Right ventricle myocardium inferior (tissue), 1 donor: ENCODE measurements at regions of chr6 and their contacts with region 1.

Region 1: DNA sequence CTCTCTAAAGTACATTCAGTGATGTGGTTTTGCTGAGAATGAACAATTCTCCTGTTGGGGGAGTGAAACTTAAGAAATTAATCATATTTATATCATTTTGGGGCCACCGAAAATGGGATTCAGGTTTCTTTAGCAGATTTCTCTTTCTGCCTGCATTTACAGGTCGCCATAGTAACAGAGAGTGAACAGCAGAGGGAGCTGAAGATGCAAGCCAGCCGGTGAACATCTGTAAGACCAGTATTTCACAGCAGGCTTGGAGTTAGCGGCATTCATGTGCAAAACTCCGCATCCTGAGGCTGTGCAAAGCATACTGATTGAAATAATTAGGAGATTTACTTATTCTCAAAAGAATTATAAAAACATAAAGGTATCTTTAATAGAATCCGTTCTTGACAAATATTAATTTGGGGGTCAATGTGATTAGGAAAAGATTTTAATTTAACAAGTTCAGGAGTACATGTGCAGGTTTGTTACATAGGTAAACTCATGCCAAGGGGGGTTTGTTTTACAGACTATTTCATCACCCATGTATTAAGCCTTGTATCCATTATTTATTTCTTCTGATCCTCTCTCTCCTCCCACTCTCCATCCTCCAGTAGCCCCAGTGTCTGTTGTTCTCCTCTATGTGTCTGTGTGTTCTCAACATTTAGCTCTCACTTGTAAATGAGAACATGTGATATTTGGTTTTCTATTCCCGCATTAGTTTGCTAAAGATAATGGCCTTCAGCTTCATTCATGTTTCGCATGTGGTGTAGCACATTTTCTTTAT is 17.8 kb upstream of the HSF2 start:
- DNase-seq: no peak
- ATAC-seq: peak; percentile 68

Region 2: DNA sequence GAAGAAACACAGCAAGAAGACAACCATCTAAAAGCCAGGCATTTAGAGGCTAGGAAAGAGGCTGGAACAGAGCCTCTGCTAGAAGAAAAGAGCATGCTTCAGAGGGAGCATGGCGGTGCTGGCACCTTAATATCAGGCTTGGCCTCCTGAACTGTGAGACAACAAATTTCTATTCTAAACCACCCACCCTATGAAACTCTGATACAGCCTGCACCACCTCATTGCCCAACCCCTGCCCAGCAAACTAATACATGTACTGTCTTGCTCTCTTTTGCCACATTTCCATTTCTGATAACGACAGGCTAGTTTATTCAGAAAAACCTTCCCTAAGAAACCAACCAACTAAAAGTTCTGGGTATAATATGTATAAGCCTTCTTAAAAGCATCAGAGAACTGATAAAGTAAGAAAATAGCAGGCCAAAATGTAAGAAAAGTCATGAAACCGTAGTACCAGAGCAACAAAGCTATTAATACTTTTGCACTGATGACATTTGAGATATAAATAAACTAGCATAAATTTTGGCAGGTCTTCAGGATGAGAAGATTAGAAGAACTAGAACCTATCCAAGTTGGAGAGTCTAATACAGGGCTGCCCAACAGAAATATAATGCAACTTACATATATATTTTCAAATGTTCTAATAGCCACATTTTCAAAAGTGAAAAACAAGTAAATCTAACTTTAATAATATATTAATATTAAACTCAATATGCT is 166.9 kb before region 1 on chr6:
- intact Hi-C with region 1: no loop called
- DNase-seq: peak; percentile 13
- ATAC-seq: no peak

Region 3: DNA sequence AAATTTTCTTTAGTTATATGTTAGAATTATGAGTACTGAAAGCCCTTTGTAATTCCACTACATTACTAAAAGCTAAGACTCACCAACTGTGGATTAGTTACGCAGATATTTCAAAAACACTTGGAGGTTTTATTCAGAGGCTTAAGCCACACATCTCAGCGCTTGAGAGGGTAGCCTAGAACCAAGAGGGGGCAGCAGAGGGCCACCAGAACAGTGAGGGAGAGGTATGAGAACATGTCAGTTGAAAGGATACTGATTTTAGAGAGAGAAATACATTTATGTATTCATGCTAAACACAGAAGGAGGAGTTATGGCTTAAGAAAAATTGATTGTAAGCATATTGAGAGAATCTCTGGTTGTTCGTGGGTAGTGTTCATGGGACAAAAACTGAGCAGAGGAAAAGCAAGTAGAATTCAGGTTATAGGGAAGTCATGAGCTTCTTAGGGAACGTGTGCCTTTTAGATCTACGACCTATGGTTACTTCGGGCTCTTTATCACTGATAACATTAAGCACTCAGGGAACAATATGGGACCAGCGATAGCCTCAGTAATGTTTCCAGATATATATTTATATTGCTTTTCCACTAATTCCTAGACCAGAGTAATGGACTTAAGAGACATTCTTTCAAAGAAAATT is 110.4 kb after region 1 on chr6:
- intact Hi-C with region 1: loop called (anchors 10 kb)
- DNase-seq: peak; percentile 71
- ATAC-seq: peak; percentile 86

Region 4: DNA sequence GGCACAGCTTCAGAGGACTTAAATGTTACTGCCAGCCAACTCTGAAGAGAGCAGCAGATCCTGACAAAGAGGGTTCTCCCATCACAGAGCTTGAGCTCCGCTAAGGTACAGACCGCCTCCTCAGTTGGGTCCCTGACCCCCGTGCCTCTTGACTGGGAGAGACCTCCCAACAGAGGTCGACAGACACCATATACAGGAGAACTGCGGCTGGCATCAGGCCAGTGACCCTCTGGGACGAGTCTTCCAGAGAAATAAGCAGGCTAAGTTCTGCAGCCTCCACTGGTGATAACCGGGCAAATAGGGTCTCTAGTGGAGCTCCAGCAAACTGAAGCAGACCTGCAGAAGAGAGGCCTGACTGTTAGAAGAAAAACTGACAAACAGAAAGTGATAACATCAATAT is 801.3 kb after region 1 on chr6:
- intact Hi-C with region 1: no loop called
- DNase-seq: peak; percentile 62
- ATAC-seq: no peak